Activated naive CD4-positive, alpha-beta T cell treated with anti-CD3 and anti-CD28 coated beads for 36 hours (primary cell): ENCODE measurements at regions of chr3 and their contacts with region 1.

Region 1: GRCh38 chr3:32374788-32375595 is 16.7 kb upstream of the CMTM7 start:
- DNase-seq: peak; percentile 88
- H3K4me3 Mint-ChIP-seq: no peak overlapping the region
- H3K27ac Mint-ChIP-seq: peak overlapping the region; percentile 69
- H3K4me1 Mint-ChIP-seq: peaks cover 35% of the 10 kb centered on the region
- H3K27me3 Mint-ChIP-seq: no peaks in the 10 kb centered on the region

Region 2: GRCh38 chr3:32238453-32239306 is 136.3 kb before region 1 on chr3 and contains the start of gene CMTM8:
- CTCF ChIA-PET with region 1: interaction called, 3 read pairs
- intact Hi-C with region 1: loop called (anchors 2 kb)
- DNase-seq: peak; percentile 70
- H3K4me3 Mint-ChIP-seq: peak within 1 kb of the TSS; percentile 82
- H3K27ac Mint-ChIP-seq: no peak within 1 kb of the TSS
- H3K4me1 Mint-ChIP-seq: peaks cover 32% of the 10 kb centered on the region
- H3K27me3 Mint-ChIP-seq: peaks cover 2% of the 10 kb centered on the region
- total RNA-seq, gene CMTM8: 16.0 to 19.1 TPM

Region 3: DNA sequence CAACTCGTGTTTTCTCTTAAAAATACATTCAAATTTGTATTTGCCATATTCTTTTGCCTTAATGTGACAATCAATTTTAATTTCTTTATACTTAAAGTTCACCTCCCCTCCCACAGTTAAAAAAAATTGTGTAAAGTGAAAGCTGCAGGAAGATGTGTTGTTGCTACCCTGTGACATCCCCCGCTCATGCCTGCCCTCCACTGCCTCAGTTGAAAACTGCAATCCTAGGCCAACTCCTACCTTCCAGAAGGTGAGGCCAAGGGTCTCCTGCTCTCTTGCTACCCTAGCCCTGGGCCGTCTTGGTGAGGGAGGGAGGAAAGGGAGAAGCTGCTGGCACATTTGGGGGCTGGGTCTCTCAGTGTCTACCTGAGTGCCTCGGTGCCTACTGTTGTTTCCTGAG is 40.3 kb before region 1 on chr3:
- CTCF ChIA-PET with region 1: interaction called, 5 read pairs
- intact Hi-C with region 1: loop called (anchors 2 kb)
- DNase-seq: peak; percentile 83
- H3K4me3 Mint-ChIP-seq: no peak overlapping the region
- H3K27ac Mint-ChIP-seq: peak overlapping the region; percentile 19
- H3K4me1 Mint-ChIP-seq: peaks cover 44% of the 10 kb centered on the region
- H3K27me3 Mint-ChIP-seq: no peaks in the 10 kb centered on the region

Region 4: DNA sequence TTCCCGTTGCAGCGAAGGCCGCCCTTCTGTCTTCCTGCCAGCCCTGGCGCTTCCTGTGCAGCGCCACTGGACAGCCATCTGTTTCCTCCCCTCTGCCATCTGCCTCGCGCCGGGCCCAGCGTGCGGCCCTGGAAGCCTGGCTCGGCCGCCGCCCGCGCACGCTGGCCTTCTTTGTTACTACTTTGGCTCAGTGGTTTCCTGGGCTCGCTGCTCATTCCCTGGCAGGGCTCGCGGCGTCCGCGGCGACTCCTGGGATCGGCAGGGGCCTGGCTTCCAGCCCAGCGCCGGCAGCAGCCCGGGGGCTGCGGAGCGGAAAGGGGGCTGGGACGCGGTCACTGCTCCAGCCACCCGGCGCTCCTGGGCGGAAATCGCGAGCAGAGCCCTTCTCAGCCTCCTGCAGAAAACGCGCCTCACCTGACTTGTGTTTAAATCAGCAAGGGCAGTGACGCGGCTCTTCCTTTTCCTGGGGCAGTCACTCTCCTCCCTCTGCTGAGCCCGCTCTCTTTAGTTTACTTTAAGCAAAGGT is 26.6 kb after region 1 on chr3:
- CTCF ChIA-PET with region 1: interaction called, 48 read pairs
- intact Hi-C with region 1: loop called (anchors 1 kb)
- DNase-seq: peak; percentile 77
- H3K4me3 Mint-ChIP-seq: peak overlapping the region; percentile 92
- H3K27ac Mint-ChIP-seq: peak overlapping the region; percentile 99
- H3K4me1 Mint-ChIP-seq: peaks cover 74% of the 10 kb centered on the region
- H3K27me3 Mint-ChIP-seq: no peaks in the 10 kb centered on the region

Region 5: GRCh38 chr3:32432711-32433530 is 57.9 kb after region 1 on chr3:
- CTCF ChIA-PET with region 1: interaction called, 6 read pairs
- intact Hi-C with region 1: loop called (anchors 2 kb)
- DNase-seq: peak; percentile 59
- H3K4me3 Mint-ChIP-seq: peak overlapping the region; percentile 76
- H3K27ac Mint-ChIP-seq: peak overlapping the region; percentile 99
- H3K4me1 Mint-ChIP-seq: peaks cover 84% of the 10 kb centered on the region
- H3K27me3 Mint-ChIP-seq: no peaks in the 10 kb centered on the region

Region 6: DNA sequence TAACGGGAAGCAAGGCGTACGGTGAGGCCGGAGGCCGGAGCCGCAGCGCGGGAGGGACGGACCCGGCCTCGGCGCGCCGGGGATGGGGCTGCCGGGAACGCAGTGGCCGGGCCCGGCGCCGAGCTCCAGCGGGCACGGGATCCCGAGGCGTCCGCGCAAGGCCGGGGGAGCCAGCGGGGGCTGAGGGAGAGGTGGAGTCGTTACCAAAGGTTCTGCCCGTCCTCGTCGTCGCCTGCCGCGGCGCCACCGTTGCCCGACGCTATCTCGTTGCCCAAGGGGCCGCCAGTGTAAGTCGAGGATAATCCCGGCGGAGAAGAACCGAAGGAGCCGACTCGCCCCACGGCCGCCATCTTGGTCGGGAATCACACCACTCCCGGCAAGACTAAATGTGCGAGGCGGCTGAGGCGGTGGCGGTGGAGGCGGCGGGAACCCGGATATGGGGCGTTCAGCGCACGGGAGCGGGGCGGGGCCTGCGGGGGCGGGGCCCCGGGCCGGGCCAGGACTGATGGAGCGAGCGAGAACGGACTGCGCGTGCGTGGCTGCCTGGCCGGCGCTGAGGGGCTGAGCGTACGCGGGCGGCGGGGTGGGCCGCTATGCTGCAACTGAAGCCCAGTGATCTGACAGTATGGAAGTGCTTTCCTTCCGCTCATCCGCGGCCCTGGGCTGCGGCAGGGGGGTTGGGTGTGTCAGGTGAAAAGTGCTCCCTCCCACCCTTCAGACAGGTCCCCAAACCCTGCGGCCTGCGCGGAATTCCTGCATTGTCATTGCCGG is 195.6 kb after region 1 on chr3 and contains the start of gene DYNC1LI1:
- CTCF ChIA-PET with region 1: no interaction called
- intact Hi-C with region 1: loop called (anchors 5 kb)
- DNase-seq: peak; percentile 94
- H3K4me3 Mint-ChIP-seq: peak within 1 kb of the TSS; percentile 88
- H3K27ac Mint-ChIP-seq: peak within 1 kb of the TSS; percentile 88
- H3K4me1 Mint-ChIP-seq: peaks cover 19% of the 10 kb centered on the region
- H3K27me3 Mint-ChIP-seq: no peaks in the 10 kb centered on the region
- total RNA-seq, gene DYNC1LI1: 29.8 to 33.1 TPM